Heart left ventricle (tissue), 16 donors: ENCODE measurements at regions of chr4 and their contacts with region 1.

Region 1: GRCh38 chr4:139734875-139735380 is 69.3 kb downstream of the MGST2 start:
- DNase-seq: peak; percentile 92 to 93 (median 93)
- ATAC-seq: peak; percentile 93 to 96 (median 96)
- H3K4me3 ChIP-seq: peak overlapping the region; percentile 3 to 70 (median 54)
- H3K27ac ChIP-seq: peak overlapping the region; percentile 53 to 93 (median 82)
- H3K4me1 ChIP-seq: peaks cover 0 to 57% (median 34%) of the 10 kb centered on the region in 12 donors
- H3K27me3 ChIP-seq: no peaks in the 10 kb centered on the region
- CTCF ChIP-seq: peak; percentile 73 to 97 (median 92)
- POLR2A ChIP-seq: peak in 1 of 2 donors; percentile 27

Region 2: DNA sequence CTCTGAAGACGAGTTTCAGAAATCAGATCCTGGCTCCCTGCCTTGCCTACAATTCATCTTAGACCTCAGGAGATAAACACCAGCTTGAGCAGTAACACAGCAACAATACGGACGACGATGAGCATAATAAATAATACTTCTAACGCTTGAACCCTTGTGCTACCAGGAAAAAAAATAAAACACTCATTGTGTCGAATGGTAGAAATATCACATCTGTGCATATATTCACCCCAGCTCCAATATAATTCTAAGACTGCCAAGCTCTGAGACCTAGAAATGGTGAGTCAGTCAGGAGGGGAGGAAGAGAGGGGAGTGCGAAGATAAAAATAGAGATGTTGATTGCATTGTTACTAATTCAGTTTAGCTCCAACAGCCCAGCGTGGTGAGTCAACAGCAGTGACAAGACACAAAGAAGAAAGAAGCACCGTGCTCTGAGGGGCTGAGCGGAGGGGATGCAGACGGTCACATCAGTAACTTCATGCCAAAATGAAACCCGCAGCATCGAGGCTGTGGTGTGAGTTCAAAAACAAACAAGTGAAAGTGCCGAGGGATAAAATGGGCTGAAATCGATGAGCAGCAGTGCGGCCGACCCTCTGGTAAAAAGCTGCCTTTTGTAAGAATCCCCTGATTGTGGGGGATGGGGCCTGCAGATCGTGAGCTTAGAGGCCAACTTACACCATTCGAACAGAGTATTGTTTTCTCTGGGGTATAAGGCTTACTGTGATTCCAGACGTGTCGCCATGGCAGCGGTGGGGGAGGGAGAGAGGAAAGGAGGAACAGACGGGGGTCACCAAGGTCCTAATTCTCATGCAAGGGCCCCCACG is 81.1 kb after region 1 on chr4:
- intact Hi-C with region 1: loop called in 1 of 10 experiments (anchors 5 kb)
- DNase-seq: peak in 4 of 5 donors; percentile 53 to 70 (median 56)
- ATAC-seq: peak; percentile 79 to 93 (median 90)
- H3K4me3 ChIP-seq: peak overlapping the region in 11 of 12 donors; percentile 5 to 63 (median 50)
- H3K27ac ChIP-seq: peak overlapping the region; percentile 12 to 88 (median 78)
- H3K4me1 ChIP-seq: peaks cover 0 to 45% (median 32%) of the 10 kb centered on the region in 12 donors
- H3K27me3 ChIP-seq: no peaks in the 10 kb centered on the region
- CTCF ChIP-seq: no peak
- POLR2A ChIP-seq: peak in 1 of 2 donors; percentile 17

Region 3: GRCh38 chr4:139919521-139919920 is 184.6 kb after region 1 on chr4:
- intact Hi-C with region 1: loop called in 3 of 10 experiments (anchors 5 to 10 kb)
- DNase-seq: peak in 3 of 5 donors; percentile 29 to 43 (median 33)
- ATAC-seq: peak; percentile 62 to 82 (median 69)
- H3K4me3 ChIP-seq: peak overlapping the region in 1 of 12 donors; percentile 1
- H3K27ac ChIP-seq: peak overlapping the region; percentile 19 to 86 (median 80)
- H3K4me1 ChIP-seq: peaks cover 11 to 90% (median 64%) of the 10 kb centered on the region in 12 donors
- H3K27me3 ChIP-seq: no peaks in the 10 kb centered on the region
- CTCF ChIP-seq: no peak
- POLR2A ChIP-seq: no peak

Region 4: DNA sequence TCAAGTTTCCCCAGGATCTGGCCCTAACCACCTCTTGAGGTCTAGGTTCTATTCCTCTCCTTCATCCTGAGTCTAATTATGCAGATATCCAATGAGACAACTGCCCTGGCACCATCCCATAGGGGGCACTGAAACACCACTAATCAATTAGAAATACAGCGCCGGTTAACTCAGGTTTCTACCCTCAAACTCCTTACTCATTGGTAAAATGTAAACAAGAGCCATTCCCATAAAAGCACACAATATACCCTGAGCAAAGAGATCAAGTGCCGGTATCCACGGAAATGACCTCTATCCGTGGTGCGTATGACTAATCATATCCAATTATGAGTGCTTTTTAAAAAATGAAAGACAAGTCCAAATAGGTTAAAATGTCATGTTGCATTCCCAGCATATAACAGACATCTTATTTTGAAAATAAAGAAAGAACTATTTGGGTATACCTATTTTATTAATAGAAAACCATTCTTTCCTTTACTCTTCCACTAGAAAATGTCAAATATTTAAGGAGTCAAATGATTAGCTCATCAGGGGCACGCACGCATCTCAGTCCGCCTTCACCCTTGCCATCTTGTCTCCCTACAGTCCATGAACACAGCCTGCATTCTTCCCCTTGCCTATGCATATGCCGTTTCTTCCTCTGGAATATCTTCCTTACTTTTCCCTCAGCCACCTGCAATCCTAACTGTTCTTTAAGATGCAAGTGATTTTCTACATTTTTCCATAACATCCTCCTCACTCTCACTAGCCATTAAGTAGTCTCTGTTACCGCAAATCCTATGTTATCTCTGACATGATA is 278.0 kb after region 1 on chr4:
- intact Hi-C with region 1: loop called in 5 of 10 experiments (anchors 5 to 10 kb)
- DNase-seq: peak in 4 of 5 donors; percentile 40 to 64 (median 57)
- ATAC-seq: peak; percentile 71 to 90 (median 88)
- H3K4me3 ChIP-seq: peak overlapping the region in 1 of 12 donors; percentile 22
- H3K27ac ChIP-seq: no peak overlapping the region
- H3K4me1 ChIP-seq: peaks cover 0 to 10% (median 0%) of the 10 kb centered on the region in 12 donors
- H3K27me3 ChIP-seq: no peaks in the 10 kb centered on the region
- CTCF ChIP-seq: peak; percentile 27 to 71 (median 54)
- POLR2A ChIP-seq: no peak

Region 5: DNA sequence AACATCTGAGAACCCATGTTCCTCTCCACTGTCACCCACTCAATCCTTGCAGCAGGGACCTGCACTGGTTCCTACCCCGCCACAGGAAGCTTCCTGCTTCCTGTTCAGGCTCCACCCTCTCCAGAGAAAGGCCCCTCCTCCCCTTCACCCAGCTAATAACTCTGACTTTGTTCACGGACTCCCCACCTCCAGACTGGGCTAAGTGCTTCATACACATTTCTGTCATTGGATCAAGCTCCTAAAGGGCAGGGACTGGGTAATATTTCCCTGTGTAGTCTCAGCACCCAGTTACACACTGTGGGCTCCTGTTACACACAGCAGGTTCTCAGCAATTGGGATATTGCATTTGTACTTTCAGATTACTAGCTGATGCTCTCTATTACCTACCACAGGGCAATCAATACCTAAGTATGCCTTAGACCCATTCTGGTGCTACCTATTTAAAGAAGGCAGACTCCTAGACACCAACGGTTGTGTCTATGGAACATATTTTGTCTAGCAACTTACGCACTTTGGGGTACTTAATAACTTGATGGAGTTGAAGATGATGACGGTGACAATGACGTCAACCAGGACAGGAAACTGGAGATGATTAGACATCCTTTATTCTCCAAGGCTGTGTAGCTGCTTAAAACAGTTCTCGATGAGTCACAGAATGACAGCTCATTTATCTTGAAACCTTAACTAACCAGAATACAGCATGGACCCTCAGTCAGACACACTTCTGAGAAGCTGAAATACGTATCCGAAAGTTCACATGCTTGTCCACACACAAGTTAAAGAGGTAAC is 361.0 kb after region 1 on chr4:
- intact Hi-C with region 1: loop called in 1 of 10 experiments (anchors 5 kb)
- DNase-seq: peak in 4 of 5 donors; percentile 52 to 69 (median 58)
- ATAC-seq: peak in 3 of 4 donors; percentile 41 to 72 (median 59)
- H3K4me3 ChIP-seq: peak overlapping the region in 7 of 12 donors; percentile 11 to 35 (median 16)
- H3K27ac ChIP-seq: peak overlapping the region; percentile 38 to 88 (median 82)
- H3K4me1 ChIP-seq: peaks cover 7 to 99% (median 74%) of the 10 kb centered on the region in 12 donors
- H3K27me3 ChIP-seq: no peaks in the 10 kb centered on the region
- CTCF ChIP-seq: no peak
- POLR2A ChIP-seq: peak in 1 of 2 donors; percentile 43